Activated CD4-positive, alpha-beta memory T cell treated with anti-CD3 and anti-CD28 coated beads, Interleukin-2, amount 10 ng/mL, durations not matched to agents 7 days and 5 days (primary cell): ENCODE measurements at regions of chr5 and their contacts with region 1.

Region 1: GRCh38 chr5:138464008-138464387 is 1.3 kb upstream of the EGR1 start:
- DNase-seq: peak; percentile 93
- H3K4me3 Mint-ChIP-seq: peak overlapping the region; percentile 83
- H3K27ac Mint-ChIP-seq: peak overlapping the region; percentile 91
- H3K4me1 Mint-ChIP-seq: peaks cover 39% of the 10 kb centered on the region
- H3K27me3 Mint-ChIP-seq: peaks cover 21% of the 10 kb centered on the region

Region 2: GRCh38 chr5:138178516-138179276 is 285.3 kb before region 1 on chr5 and contains the starts of genes BRD8 and KIF20A:
- CTCF ChIA-PET with region 1: interaction called, 5 read pairs
- POLR2A ChIA-PET with region 1: interaction called, 17 read pairs
- DNase-seq: peak; percentile 94
- H3K4me3 Mint-ChIP-seq: no peak within 1 kb of the TSS
- H3K27ac Mint-ChIP-seq: no peak within 1 kb of the TSS
- H3K4me1 Mint-ChIP-seq: peaks cover 36% of the 10 kb centered on the region
- H3K27me3 Mint-ChIP-seq: no peaks in the 10 kb centered on the region
- total RNA-seq, gene BRD8: 62.9 to 72.7 TPM
- total RNA-seq, gene KIF20A: 50.7 to 55.7 TPM

Region 3: DNA sequence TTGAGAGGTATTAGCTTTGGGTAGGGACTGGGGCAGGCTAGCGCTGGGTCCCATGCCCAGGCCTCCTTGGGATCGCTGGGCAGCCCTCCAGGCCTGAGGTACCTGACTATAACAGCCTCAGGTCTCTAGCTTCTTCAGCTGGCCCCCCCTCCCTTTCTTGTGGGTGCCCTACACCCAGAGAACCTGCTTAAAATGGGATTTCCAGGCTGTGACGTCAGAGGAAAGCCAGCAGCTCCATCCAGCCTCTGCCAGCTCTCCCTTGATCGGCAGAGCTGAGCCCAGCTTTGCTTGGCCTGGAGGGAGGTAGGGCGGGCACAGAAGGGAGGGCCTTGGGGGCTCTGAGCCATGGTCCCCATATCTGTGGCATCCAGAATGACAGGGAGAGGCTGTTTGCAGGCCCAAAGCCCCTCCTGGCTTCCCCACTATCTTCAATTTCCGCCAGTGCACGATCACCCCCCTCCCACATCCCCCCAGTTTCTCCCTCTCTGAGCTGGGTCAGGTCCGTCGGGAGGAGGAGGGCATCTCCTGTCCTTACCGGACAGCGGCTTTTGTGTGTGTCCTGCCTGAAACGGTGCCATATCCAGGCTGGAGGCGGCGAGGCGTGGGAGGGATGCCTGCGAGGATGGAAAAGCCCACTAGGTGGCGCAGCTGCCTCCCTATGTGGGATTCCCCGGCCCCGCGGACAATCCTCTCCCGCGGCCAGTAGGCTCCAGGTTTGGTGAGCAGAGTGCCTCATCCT is 14.3 kb before region 1 on chr5:
- CTCF ChIA-PET with region 1: interaction called, 46 read pairs
- POLR2A ChIA-PET with region 1: interaction called, 8 read pairs
- DNase-seq: peak; percentile 82
- H3K4me3 Mint-ChIP-seq: no peak overlapping the region
- H3K27ac Mint-ChIP-seq: no peak overlapping the region
- H3K4me1 Mint-ChIP-seq: peaks cover 5% of the 10 kb centered on the region
- H3K27me3 Mint-ChIP-seq: peaks cover 3% of the 10 kb centered on the region

Region 4: GRCh38 chr5:138491669-138492559 is 27.9 kb after region 1 on chr5:
- CTCF ChIA-PET with region 1: interaction called, 8 read pairs
- POLR2A ChIA-PET with region 1: interaction called, 16 read pairs
- DNase-seq: peak; percentile 89
- H3K4me3 Mint-ChIP-seq: peak overlapping the region; percentile 82
- H3K27ac Mint-ChIP-seq: no peak overlapping the region
- H3K4me1 Mint-ChIP-seq: peaks cover 14% of the 10 kb centered on the region
- H3K27me3 Mint-ChIP-seq: peaks cover 37% of the 10 kb centered on the region

Region 5: GRCh38 chr5:138498376-138498775 is 34.4 kb after region 1 on chr5:
- CTCF ChIA-PET with region 1: interaction called, 21 read pairs
- POLR2A ChIA-PET with region 1: interaction called, 15 read pairs
- DNase-seq: no peak
- H3K4me3 Mint-ChIP-seq: no peak overlapping the region
- H3K27ac Mint-ChIP-seq: no peak overlapping the region
- H3K4me1 Mint-ChIP-seq: no peaks in the 10 kb centered on the region
- H3K27me3 Mint-ChIP-seq: peaks cover 7% of the 10 kb centered on the region

Region 6: GRCh38 chr5:138503487-138504270 is 39.7 kb after region 1 on chr5:
- CTCF ChIA-PET with region 1: interaction called, 21 read pairs
- POLR2A ChIA-PET with region 1: interaction called, 15 read pairs
- DNase-seq: peak; percentile 28
- H3K4me3 Mint-ChIP-seq: no peak overlapping the region
- H3K27ac Mint-ChIP-seq: no peak overlapping the region
- H3K4me1 Mint-ChIP-seq: no peaks in the 10 kb centered on the region
- H3K27me3 Mint-ChIP-seq: no peaks in the 10 kb centered on the region

Region 7: DNA sequence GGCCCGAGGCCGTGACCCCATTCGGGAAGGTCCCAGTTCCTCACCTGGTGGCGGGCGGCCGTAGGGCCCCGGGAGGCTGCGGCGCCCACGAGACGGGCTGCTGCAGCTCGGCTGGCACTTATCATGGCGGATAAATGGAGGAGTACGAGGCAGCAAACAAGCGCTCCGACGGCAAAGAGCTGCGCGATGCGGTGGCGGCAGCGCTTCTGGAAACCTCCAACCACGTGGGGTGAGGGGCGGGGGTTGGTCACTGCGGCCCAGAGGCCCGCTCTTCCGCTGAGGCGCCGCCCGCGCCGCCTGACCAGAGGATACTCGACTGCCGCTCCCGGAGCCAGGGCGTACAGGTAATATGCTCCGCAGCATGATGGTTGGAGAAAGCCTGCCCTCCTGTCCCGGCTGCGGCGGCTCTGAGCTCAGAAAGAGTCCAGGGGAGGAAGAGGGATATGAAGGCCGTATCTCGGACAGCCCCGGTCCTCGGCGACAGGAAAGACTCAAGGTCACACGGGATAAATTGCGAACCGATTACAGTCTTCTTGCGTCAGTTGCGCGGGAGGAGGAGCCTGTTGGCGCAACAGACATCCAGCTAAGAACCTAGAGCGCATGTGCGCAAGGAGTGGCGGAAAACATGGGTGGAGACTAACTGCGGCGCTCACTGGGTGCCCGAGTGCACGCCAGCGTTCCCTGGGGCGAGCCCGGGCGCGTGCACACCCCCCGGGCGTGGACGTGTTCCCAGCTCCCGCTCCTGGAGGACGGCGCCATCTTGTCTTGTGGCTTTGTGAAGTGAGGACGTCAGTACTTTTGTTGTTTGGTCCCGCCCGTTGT is 111.4 kb after region 1 on chr5 and contains the start of gene HSPA9:
- CTCF ChIA-PET with region 1: interaction called, 6 read pairs
- POLR2A ChIA-PET with region 1: interaction called, 25 read pairs
- DNase-seq: peak; percentile 98
- H3K4me3 Mint-ChIP-seq: peak within 1 kb of the TSS; percentile 92
- H3K27ac Mint-ChIP-seq: peak within 1 kb of the TSS; percentile 97
- H3K4me1 Mint-ChIP-seq: peaks cover 48% of the 10 kb centered on the region
- H3K27me3 Mint-ChIP-seq: no peaks in the 10 kb centered on the region
- total RNA-seq, gene HSPA9: 205 to 217 TPM